Dendritic cell treated with granulocyte-macrophage colony-stimulating factor and Interleukin-4, amounts not matched to agents 40 ng/mL and 50 ng/mL, for 4 days (primary cell): ENCODE measurements at regions of chr12 and their contacts with region 1.

Region 1: GRCh38 chr12:107093417-107094182 is at the start of gene CRY1:
- H3K4me3 Mint-ChIP-seq: no peak within 1 kb of the TSS
- H3K27ac Mint-ChIP-seq: no peak within 1 kb of the TSS
- H3K4me1 Mint-ChIP-seq: peaks cover 7% of the 10 kb centered on the region
- H3K27me3 Mint-ChIP-seq: peaks cover 6% of the 10 kb centered on the region

Region 2: GRCh38 chr12:106774005-106774807 is 319.4 kb before region 1 on chr12 and contains the start of gene RIC8B:
- intact Hi-C with region 1: loop called (anchors 5 kb)
- H3K4me3 Mint-ChIP-seq: peak within 1 kb of the TSS; percentile 93
- H3K27ac Mint-ChIP-seq: peak within 1 kb of the TSS; percentile 94
- H3K4me1 Mint-ChIP-seq: peaks cover 18% of the 10 kb centered on the region
- H3K27me3 Mint-ChIP-seq: peaks cover 9% of the 10 kb centered on the region

Region 3: DNA sequence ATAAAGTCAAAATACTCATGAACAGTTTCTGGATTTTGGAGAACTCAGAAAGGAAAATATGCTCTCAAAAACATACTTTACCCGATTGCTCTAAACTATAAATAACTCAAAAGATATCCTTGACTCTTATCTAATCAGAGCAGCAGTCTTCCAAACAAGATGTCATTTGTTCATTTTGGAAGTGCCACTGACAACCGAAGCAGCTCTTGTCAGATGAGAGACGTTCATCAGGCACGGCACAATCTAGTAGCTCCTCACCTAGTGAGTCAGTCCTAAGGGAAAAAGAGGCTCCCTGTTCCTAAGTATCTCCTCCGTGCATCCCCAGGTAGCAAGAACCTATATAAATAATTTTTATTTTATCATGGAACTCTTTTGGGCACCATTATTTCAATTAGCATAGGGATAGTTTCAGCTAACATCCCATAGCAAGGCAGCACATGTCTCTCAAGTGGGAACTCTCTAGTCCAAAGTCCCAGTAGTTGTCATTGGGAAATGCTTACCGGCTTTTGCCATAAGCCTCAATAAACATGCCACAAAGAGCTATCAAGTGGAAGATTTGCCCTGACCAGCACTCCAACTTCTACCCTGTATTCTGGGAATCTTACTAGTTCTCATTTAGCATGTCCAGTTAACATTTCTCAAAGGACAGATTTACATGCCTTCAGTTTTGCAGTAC is 152.0 kb before region 1 on chr12:
- intact Hi-C with region 1: no loop called
- H3K4me3 Mint-ChIP-seq: no peak overlapping the region
- H3K27ac Mint-ChIP-seq: no peak overlapping the region
- H3K4me1 Mint-ChIP-seq: no peaks in the 10 kb centered on the region
- H3K27me3 Mint-ChIP-seq: peaks cover 62% of the 10 kb centered on the region

Region 4: DNA sequence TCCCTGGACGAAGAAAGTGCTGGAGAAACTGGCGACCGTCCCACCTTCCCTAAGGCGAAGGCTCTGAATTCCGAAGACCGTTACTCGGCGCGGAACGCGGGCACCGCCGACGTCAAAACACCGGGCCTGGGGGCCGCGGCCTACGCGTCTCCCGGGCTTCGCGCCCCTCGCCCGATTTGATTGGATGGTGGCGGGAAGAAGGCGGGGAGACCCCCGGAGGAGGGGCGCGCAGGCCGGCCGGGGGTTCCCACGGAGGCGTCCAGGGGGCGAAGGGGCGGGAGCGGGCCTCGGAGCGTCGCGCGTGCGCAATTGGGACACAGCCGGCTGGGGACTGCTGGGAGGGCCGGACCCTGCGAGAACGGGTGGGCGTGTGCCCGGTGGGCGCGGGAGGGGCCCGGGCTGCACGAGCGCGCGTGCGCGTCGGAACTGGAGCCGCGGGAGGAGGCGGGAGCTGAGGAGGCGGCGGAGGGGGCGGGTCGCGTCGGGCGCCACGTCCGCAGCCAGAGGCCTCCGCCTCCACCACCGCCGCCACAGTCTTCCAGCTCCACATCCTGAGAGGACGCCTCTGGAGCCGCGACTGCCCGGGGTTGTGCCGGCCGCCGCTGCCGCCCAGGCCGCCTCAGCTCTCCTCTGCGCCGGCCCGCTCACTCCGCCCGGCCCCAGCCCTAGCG is 138.1 kb before region 1 on chr12 and contains the start of gene TMEM263:
- intact Hi-C with region 1: loop called (anchors 10 kb)
- H3K4me3 Mint-ChIP-seq: peak within 1 kb of the TSS; percentile 94
- H3K27ac Mint-ChIP-seq: peak within 1 kb of the TSS; percentile 76
- H3K4me1 Mint-ChIP-seq: peaks cover 5% of the 10 kb centered on the region
- H3K27me3 Mint-ChIP-seq: peaks cover 57% of the 10 kb centered on the region

Region 5: GRCh38 chr12:106986625-106987430 is 106.8 kb before region 1 on chr12 and contains the start of gene MTERF2:
- intact Hi-C with region 1: loop called (anchors 2 kb)
- H3K4me3 Mint-ChIP-seq: peak within 1 kb of the TSS; percentile 92
- H3K27ac Mint-ChIP-seq: peak within 1 kb of the TSS; percentile 84
- H3K4me1 Mint-ChIP-seq: peaks cover 21% of the 10 kb centered on the region
- H3K27me3 Mint-ChIP-seq: peaks cover 8% of the 10 kb centered on the region

Region 6: GRCh38 chr12:106999446-106999845 is 94.2 kb before region 1 on chr12:
- intact Hi-C with region 1: no loop called
- H3K4me3 Mint-ChIP-seq: no peak overlapping the region
- H3K27ac Mint-ChIP-seq: no peak overlapping the region
- H3K4me1 Mint-ChIP-seq: no peaks in the 10 kb centered on the region
- H3K27me3 Mint-ChIP-seq: no peaks in the 10 kb centered on the region